ENCODE measurements at regions of chr9 and their contacts with region 1.

Region 1: GRCh38 chr9:115867326-115867725 is 286.3 kb upstream of the PAPPA start:
- DNase-seq: no peak
- ATAC-seq: no peak
- H3K4me3 ChIP-seq: no peak overlapping the region
- H3K27ac ChIP-seq: no peak overlapping the region
- H3K4me1 ChIP-seq: no peaks in the 10 kb centered on the region
- H3K27me3 ChIP-seq: no peaks in the 10 kb centered on the region
- CTCF ChIP-seq: no peak
- POLR2A ChIP-seq: no peak

Region 2: DNA sequence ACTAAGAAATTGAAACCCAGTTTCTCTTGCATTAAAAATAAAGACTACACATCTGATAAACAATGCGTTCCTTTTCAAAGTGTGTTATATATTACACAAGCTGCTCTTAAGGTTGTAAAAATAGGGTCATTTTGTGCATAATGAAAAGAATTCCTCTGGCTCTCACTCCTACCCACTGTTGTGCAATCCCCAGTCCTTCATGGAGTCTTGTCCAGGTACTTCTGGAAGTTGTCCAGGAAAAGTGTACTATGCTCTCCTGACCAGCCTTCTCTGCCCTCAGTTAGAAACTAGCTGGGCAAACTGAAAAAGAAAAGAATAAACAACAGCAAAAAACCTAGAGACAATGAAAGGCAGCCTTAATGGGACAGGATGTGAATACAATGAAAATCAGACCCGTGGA is 59.2 kb before region 1 on chr9:
- intact Hi-C with region 1: no loop called
- DNase-seq: no peak
- ATAC-seq: no peak
- H3K4me3 ChIP-seq: no peak overlapping the region
- H3K27ac ChIP-seq: no peak overlapping the region
- H3K4me1 ChIP-seq: no peaks in the 10 kb centered on the region
- H3K27me3 ChIP-seq: no peaks in the 10 kb centered on the region
- CTCF ChIP-seq: no peak
- POLR2A ChIP-seq: no peak

Region 3: GRCh38 chr9:115845653-115846312 is 21.5 kb before region 1 on chr9:
- intact Hi-C with region 1: loop called in 1 of 10 experiments (anchors 1 kb)
- DNase-seq: no peak
- ATAC-seq: no peak
- H3K4me3 ChIP-seq: no peak overlapping the region
- H3K27ac ChIP-seq: no peak overlapping the region
- H3K4me1 ChIP-seq: no peaks in the 10 kb centered on the region
- H3K27me3 ChIP-seq: no peaks in the 10 kb centered on the region
- CTCF ChIP-seq: no peak
- POLR2A ChIP-seq: no peak